HEK293T (cell line): ENCODE measurements at regions of chr14 and their contacts with region 1.

Region 1: DNA sequence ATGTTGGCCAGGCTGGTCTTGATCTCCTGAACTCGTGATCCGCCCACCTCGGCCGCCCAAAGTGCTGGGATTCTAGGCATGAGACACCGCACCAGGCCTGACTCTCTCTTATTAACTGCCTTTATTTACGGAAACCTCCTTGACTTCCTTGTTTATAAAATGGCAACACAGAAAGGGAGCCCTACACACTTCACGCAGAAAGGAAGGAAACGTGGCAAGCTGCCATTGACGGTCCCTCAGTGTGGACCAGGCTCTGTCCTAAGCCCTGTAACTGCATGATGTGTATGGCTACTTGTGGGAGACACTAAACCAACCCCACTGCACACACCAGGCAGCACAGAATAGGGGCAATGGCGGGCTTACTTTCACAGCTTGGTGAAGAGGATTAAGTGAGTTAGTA is 11.7 kb downstream of the CINP start:
- DNase-seq: no peak

Region 2: GRCh38 chr14:102362545-102363181 is 11.6 kb after region 1 on chr14 and contains the starts of genes CINP and TECPR2:
- CTCF ChIA-PET with region 1: no interaction called
- POLR2A ChIA-PET with region 1: interaction called, 14 read pairs
- DNase-seq: peak; percentile 97